Common myeloid progenitor, CD34-positive (primary cell): ENCODE measurements at regions of chr10 and their contacts with region 1.

Region 1: GRCh38 chr10:62244780-62245467 is 23.7 kb downstream of the RTKN2 start:
- DNase-seq: peak; percentile 46 to 50 (median 49)
- H3K4me3 ChIP-seq: peak overlapping the region in 1 of 7 experiments; percentile 34
- H3K27ac ChIP-seq: no peak overlapping the region
- H3K4me1 ChIP-seq: peaks cover 11 to 28% (median 12%) of the 10 kb centered on the region in 4 experiments
- H3K27me3 ChIP-seq: no peaks in the 10 kb centered on the region

Region 2: GRCh38 chr10:62264702-62265436 is 19.9 kb after region 1 on chr10:
- CTCF ChIA-PET with region 1: interaction called, 14 read pairs
- POLR2A ChIA-PET with region 1: no interaction called
- DNase-seq: peak; percentile 38 to 69 (median 59)
- H3K4me3 ChIP-seq: no peak overlapping the region
- H3K27ac ChIP-seq: no peak overlapping the region
- H3K4me1 ChIP-seq: peaks cover 6 to 20% (median 17%) of the 10 kb centered on the region in 4 experiments
- H3K27me3 ChIP-seq: peaks cover 0 to 6% (median 0%) of the 10 kb centered on the region in 5 experiments

Region 3: GRCh38 chr10:62972103-62972502 is 727.2 kb after region 1 on chr10:
- CTCF ChIA-PET with region 1: no interaction called
- POLR2A ChIA-PET with region 1: no interaction called
- DNase-seq: no peak
- H3K4me3 ChIP-seq: no peak overlapping the region
- H3K27ac ChIP-seq: no peak overlapping the region
- H3K4me1 ChIP-seq: no peaks in the 10 kb centered on the region
- H3K27me3 ChIP-seq: peaks cover 0 to 2% (median 0%) of the 10 kb centered on the region in 5 experiments